CD4-positive, alpha-beta T cell (primary cell): ENCODE measurements at regions of chr17 and their contacts with region 1.

Region 1: DNA sequence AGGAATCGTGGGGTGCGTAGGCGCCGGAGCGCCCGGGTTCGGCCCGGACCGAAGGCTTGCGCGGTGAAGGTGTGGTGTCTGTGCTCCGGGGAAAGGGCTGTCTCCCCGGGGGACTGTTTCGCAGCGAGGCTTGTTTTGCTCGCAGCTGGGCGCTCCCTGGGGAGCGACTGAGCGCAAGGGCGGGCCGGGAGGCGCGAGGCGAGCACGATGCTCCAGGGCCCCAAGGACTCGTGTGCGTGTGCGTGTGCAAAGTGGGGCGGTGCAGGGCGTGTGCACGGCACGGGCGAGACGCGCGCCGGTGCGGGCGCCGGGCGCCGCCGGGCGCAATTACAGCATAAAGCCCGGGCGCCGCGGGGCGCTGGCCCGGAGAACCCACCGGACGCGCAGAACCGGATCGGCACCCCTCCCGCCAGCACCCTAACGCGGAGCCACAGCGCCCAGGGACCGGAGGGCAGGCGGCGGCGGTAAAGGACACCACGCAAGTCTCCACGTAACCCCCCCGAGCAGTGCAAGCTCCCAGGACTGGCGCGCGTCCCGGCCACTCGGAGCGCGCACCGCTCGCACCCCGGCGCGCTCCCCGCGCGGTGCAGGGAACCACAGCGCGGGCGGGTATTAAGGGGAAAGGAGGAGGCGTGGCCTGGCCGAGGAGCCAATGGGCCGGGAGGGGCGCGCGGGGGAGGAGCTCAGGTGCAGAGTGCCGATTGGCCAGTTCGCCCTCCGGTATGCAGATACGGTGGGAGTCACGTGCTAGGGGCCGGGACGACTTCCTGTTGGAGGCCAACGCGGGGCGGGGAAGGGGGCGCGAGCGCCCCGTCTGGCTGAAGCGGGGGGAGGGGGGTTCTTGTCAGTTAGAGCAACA is at the start of gene TNRC6C:
- DNase-seq: peak; percentile 99 to 100 (median 100)
- ATAC-seq: peak; percentile 85
- H3K4me3 ChIP-seq: peak within 1 kb of the TSS; percentile 95
- H3K4me3 Mint-ChIP-seq: peak within 1 kb of the TSS; percentile 96
- H3K27ac ChIP-seq: peak within 1 kb of the TSS; percentile 44 to 76
- H3K27ac Mint-ChIP-seq: peak within 1 kb of the TSS; percentile 94
- H3K4me1 ChIP-seq: peaks cover 36% of the 10 kb centered on the region
- H3K4me1 Mint-ChIP-seq: peaks cover 44% of the 10 kb centered on the region
- H3K27me3 ChIP-seq: no peaks in the 10 kb centered on the region
- H3K27me3 Mint-ChIP-seq: no peaks in the 10 kb centered on the region
- CTCF ChIP-seq: no peak
- total RNA-seq, gene TNRC6C: 50.7 to 57.3 TPM

Region 2: DNA sequence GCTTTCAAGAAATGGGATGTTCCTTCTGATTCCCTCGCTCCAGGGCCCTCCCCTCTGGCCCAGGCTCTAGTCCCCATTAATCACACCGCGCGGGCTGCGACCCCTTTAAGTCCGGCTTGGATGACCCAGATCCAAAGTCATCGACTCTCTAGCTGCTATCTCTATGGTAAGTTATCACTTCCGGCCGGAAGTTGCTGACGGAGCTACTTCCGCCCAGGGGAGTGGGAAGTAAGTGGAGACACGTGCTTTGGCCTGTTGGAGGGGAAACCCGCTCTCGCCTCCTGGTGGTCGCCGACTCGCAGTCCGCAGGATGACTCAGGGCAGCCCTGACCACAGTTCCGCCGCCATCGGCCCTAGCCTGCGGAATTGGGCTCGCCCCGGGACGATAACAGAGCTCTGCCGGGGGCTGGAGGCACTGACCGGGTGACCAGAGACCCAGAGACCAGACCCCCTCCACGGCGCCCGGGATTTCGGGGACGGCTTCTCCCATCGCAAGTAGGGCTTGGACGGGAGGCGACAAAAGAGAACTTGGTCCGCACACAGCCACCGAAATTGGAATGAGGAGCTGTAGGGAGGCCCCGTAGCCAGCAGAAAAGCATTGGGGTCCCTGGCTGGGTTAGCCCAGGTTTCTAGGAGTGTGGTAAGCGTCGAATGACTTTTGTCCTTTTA is 869.5 kb before region 1 on chr17:
- CTCF ChIA-PET with region 1: no interaction called
- POLR2A ChIA-PET with region 1: interaction called, 11 read pairs
- intact Hi-C with region 1: no loop called
- DNase-seq: peak; percentile 68 to 95 (median 80)
- ATAC-seq: peak; percentile 87
- H3K4me3 ChIP-seq: peak overlapping the region; percentile 98
- H3K4me3 Mint-ChIP-seq: peak overlapping the region; percentile 99
- H3K27ac ChIP-seq: peak overlapping the region; percentile 70 to 95
- H3K27ac Mint-ChIP-seq: peak overlapping the region; percentile 95
- H3K4me1 ChIP-seq: peaks cover 49% of the 10 kb centered on the region
- H3K4me1 Mint-ChIP-seq: peaks cover 44% of the 10 kb centered on the region
- H3K27me3 ChIP-seq: no peaks in the 10 kb centered on the region
- H3K27me3 Mint-ChIP-seq: no peaks in the 10 kb centered on the region
- CTCF ChIP-seq: peak; percentile 57

Region 3: GRCh38 chr17:77451245-77451893 is 506.7 kb before region 1 on chr17:
- CTCF ChIA-PET with region 1: no interaction called
- POLR2A ChIA-PET with region 1: interaction called, 25 read pairs
- intact Hi-C with region 1: no loop called
- DNase-seq: peak; percentile 53 to 85 (median 72)
- ATAC-seq: peak; percentile 47
- H3K4me3 ChIP-seq: peak overlapping the region; percentile 94
- H3K4me3 Mint-ChIP-seq: peak overlapping the region; percentile 98
- H3K27ac ChIP-seq: peak overlapping the region; percentile 67 to 90
- H3K27ac Mint-ChIP-seq: peak overlapping the region; percentile 93
- H3K4me1 ChIP-seq: peaks cover 84% of the 10 kb centered on the region
- H3K4me1 Mint-ChIP-seq: peaks cover 65% of the 10 kb centered on the region
- H3K27me3 ChIP-seq: no peaks in the 10 kb centered on the region
- H3K27me3 Mint-ChIP-seq: no peaks in the 10 kb centered on the region
- CTCF ChIP-seq: no peak

Region 4: GRCh38 chr17:77696721-77697460 is 261.2 kb before region 1 on chr17:
- CTCF ChIA-PET with region 1: no interaction called
- POLR2A ChIA-PET with region 1: interaction called, 12 read pairs
- intact Hi-C with region 1: no loop called
- DNase-seq: peak in 2 of 14 experiments; percentile 8 to 14
- ATAC-seq: peak; percentile 49
- H3K4me3 ChIP-seq: no peak overlapping the region
- H3K4me3 Mint-ChIP-seq: no peak overlapping the region
- H3K27ac ChIP-seq: no peak overlapping the region
- H3K27ac Mint-ChIP-seq: no peak overlapping the region
- H3K4me1 ChIP-seq: peaks cover 34% of the 10 kb centered on the region
- H3K4me1 Mint-ChIP-seq: peaks cover 40% of the 10 kb centered on the region
- H3K27me3 ChIP-seq: peaks cover 5% of the 10 kb centered on the region in 2 experiments
- H3K27me3 Mint-ChIP-seq: no peaks in the 10 kb centered on the region
- CTCF ChIP-seq: no peak

Region 5: GRCh38 chr17:77852666-77853207 is 105.3 kb before region 1 on chr17:
- CTCF ChIA-PET with region 1: no interaction called
- POLR2A ChIA-PET with region 1: no interaction called
- intact Hi-C with region 1: no loop called
- DNase-seq: peak in 1 of 14 experiments; percentile 7
- ATAC-seq: no peak
- H3K4me3 ChIP-seq: no peak overlapping the region
- H3K4me3 Mint-ChIP-seq: no peak overlapping the region
- H3K27ac ChIP-seq: no peak overlapping the region
- H3K27ac Mint-ChIP-seq: no peak overlapping the region
- H3K4me1 ChIP-seq: peaks cover 27% of the 10 kb centered on the region
- H3K4me1 Mint-ChIP-seq: no peaks in the 10 kb centered on the region
- H3K27me3 ChIP-seq: no peaks in the 10 kb centered on the region
- H3K27me3 Mint-ChIP-seq: no peaks in the 10 kb centered on the region
- CTCF ChIP-seq: no peak

Region 6: DNA sequence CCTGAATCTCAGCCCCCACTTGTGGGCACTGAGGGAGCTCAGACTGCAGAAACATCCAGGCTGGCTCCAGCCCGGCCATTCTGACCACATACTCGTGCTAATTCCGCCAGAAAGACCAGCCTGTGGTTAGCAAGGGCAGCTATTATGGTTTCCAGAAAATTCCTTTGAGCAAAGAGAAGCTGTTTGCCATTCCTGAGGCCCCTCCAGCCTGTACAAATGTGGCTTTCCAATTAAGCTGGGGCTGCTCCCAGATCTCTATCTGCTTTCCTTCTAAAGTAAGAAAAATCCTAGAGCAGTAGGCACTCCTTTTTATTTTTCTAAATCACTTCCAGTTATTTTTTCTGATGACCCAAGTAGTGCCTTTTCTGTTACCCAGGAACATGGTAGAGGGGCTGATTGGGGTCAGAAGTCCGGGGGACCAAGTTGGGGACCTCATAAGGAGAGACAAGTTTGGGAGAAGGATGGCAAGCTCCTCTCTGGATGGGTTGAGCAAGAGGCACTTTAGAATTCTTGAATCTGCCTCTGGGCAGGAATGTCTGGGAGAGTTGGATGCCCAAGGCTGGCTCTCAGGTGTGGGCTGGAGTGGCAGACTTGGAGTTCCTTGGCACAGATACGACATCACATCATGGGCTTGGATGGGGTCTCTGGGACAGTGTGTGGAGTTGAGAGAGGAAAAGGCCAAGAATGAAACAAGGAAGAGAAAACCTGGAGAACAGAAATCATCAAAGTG is 82.9 kb before region 1 on chr17:
- CTCF ChIA-PET with region 1: no interaction called
- POLR2A ChIA-PET with region 1: interaction called, 120 read pairs
- intact Hi-C with region 1: no loop called
- DNase-seq: no peak
- ATAC-seq: no peak
- H3K4me3 ChIP-seq: no peak overlapping the region
- H3K4me3 Mint-ChIP-seq: peak overlapping the region; percentile 25
- H3K27ac ChIP-seq: no peak overlapping the region
- H3K27ac Mint-ChIP-seq: peak overlapping the region; percentile 97
- H3K4me1 ChIP-seq: peaks cover 89% of the 10 kb centered on the region
- H3K4me1 Mint-ChIP-seq: peaks cover 83% of the 10 kb centered on the region
- H3K27me3 ChIP-seq: no peaks in the 10 kb centered on the region
- H3K27me3 Mint-ChIP-seq: no peaks in the 10 kb centered on the region
- CTCF ChIP-seq: no peak

Region 7: DNA sequence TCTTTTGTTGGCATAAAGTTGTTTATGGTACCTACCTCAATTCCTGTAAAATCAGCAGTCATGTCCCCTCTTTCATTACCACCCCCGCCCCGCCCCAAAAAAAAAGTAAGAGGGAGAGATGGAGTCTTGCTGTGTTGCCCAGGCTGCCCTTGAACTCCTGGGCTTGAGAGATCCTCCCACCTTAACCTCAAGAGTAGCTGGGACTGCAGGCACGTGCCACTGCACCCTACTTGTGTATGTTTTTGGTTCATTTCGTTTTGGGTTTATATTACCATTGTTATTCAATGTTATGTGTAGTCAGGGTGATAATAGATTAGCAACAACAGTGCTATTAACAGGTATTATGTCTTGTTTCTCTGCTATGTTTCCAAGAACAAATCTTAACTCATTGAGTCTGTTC is 16.3 kb after region 1 on chr17:
- CTCF ChIA-PET with region 1: interaction called, 4 read pairs
- POLR2A ChIA-PET with region 1: interaction called, 41 read pairs
- intact Hi-C with region 1: no loop called
- DNase-seq: no peak
- ATAC-seq: peak; percentile 46
- H3K4me3 ChIP-seq: no peak overlapping the region
- H3K4me3 Mint-ChIP-seq: no peak overlapping the region
- H3K27ac ChIP-seq: no peak overlapping the region
- H3K27ac Mint-ChIP-seq: no peak overlapping the region
- H3K4me1 ChIP-seq: peaks cover 22% of the 10 kb centered on the region
- H3K4me1 Mint-ChIP-seq: peaks cover 91% of the 10 kb centered on the region
- H3K27me3 ChIP-seq: no peaks in the 10 kb centered on the region
- H3K27me3 Mint-ChIP-seq: no peaks in the 10 kb centered on the region
- CTCF ChIP-seq: no peak

Region 8: DNA sequence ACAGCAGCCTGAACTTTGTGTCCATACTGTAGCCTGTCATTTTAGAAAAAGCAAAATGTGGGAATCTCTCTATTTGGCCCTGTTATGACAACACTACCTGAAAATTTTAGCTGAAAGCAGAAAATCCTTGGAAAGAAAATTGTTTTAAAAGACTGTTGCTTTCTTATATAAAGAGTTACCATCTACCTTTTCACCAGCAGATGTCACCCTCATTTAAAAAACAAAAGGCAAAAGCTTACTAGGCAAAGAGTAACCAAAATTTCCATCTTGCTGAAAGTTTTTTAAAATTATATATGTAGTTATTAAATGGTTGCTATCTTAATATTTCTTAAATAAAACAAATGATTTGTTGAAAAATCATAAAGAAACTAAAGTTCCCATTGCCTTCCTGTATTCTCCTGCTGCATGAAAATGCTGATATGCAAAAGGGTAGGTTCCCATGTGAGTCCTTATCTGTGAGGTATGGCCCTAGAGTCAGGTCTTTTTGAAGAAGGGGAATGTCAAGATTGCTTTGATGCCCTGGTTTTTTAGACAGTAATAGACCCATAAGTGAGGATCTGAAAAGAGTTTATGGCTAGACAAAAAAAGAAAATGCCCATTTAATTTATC is 61.4 kb after region 1 on chr17:
- CTCF ChIA-PET with region 1: interaction called, 8 read pairs
- POLR2A ChIA-PET with region 1: interaction called, 56 read pairs
- intact Hi-C with region 1: loop called in 1 of 2 experiments (anchors 5 kb)
- DNase-seq: peak in 3 of 14 experiments; percentile 51 to 57 (median 55)
- ATAC-seq: no peak
- H3K4me3 ChIP-seq: no peak overlapping the region
- H3K4me3 Mint-ChIP-seq: no peak overlapping the region
- H3K27ac ChIP-seq: no peak overlapping the region
- H3K27ac Mint-ChIP-seq: no peak overlapping the region
- H3K4me1 ChIP-seq: peaks cover 15% of the 10 kb centered on the region
- H3K4me1 Mint-ChIP-seq: peaks cover 25% of the 10 kb centered on the region
- H3K27me3 ChIP-seq: no peaks in the 10 kb centered on the region
- H3K27me3 Mint-ChIP-seq: no peaks in the 10 kb centered on the region
- CTCF ChIP-seq: peak; percentile 72

Region 9: GRCh38 chr17:78117027-78117964 is 159.2 kb after region 1 on chr17:
- CTCF ChIA-PET with region 1: no interaction called
- POLR2A ChIA-PET with region 1: no interaction called
- intact Hi-C with region 1: no loop called
- DNase-seq: peak in 6 of 14 experiments; percentile 23 to 62 (median 49)
- ATAC-seq: no peak
- H3K4me3 ChIP-seq: no peak overlapping the region
- H3K4me3 Mint-ChIP-seq: peak overlapping the region; percentile 25
- H3K27ac ChIP-seq: peak overlapping the region in 1 of 2 donors; percentile 46
- H3K27ac Mint-ChIP-seq: peak overlapping the region; percentile 76
- H3K4me1 ChIP-seq: peaks cover 97% of the 10 kb centered on the region
- H3K4me1 Mint-ChIP-seq: peaks cover 61% of the 10 kb centered on the region
- H3K27me3 ChIP-seq: no peaks in the 10 kb centered on the region
- H3K27me3 Mint-ChIP-seq: no peaks in the 10 kb centered on the region
- CTCF ChIP-seq: peak; percentile 30